ENCODE measurements at regions of chr2 and their contacts with region 1.

Region 1: GRCh38 chr2:55175254-55176025 is 56.7 kb downstream of the CLHC1 start:
- DNase-seq: no peak
- H3K4me3 Mint-ChIP-seq: no peak overlapping the region
- H3K27ac Mint-ChIP-seq: no peak overlapping the region
- H3K4me1 Mint-ChIP-seq: peaks cover 7% of the 10 kb centered on the region
- H3K27me3 Mint-ChIP-seq: no peaks in the 10 kb centered on the region

Region 2: GRCh38 chr2:54106631-54107454 is 1068.6 kb before region 1 on chr2:
- CTCF ChIA-PET with region 1: interaction called, 3 read pairs
- intact Hi-C with region 1: loop called (anchors 5 kb)
- DNase-seq: peak; percentile 71
- H3K4me3 Mint-ChIP-seq: no peak overlapping the region
- H3K27ac Mint-ChIP-seq: no peak overlapping the region
- H3K4me1 Mint-ChIP-seq: peaks cover 7% of the 10 kb centered on the region
- H3K27me3 Mint-ChIP-seq: no peaks in the 10 kb centered on the region

Region 3: GRCh38 chr2:54657664-54658083 is 517.8 kb before region 1 on chr2:
- CTCF ChIA-PET with region 1: no interaction called
- intact Hi-C with region 1: loop called (anchors 2 kb)
- DNase-seq: peak; percentile 58
- H3K4me3 Mint-ChIP-seq: no peak overlapping the region
- H3K27ac Mint-ChIP-seq: peak overlapping the region; percentile 60
- H3K4me1 Mint-ChIP-seq: peaks cover 18% of the 10 kb centered on the region
- H3K27me3 Mint-ChIP-seq: no peaks in the 10 kb centered on the region

Region 4: GRCh38 chr2:54763636-54764291 is 411.7 kb before region 1 on chr2:
- CTCF ChIA-PET with region 1: no interaction called
- intact Hi-C with region 1: loop called (anchors 2 kb)
- DNase-seq: peak; percentile 53
- H3K4me3 Mint-ChIP-seq: no peak overlapping the region
- H3K27ac Mint-ChIP-seq: no peak overlapping the region
- H3K4me1 Mint-ChIP-seq: peaks cover 12% of the 10 kb centered on the region
- H3K27me3 Mint-ChIP-seq: no peaks in the 10 kb centered on the region

Region 5: GRCh38 chr2:55014962-55015939 is 160.2 kb before region 1 on chr2:
- CTCF ChIA-PET with region 1: interaction called, 40 read pairs
- intact Hi-C with region 1: loop called (anchors 1 kb)
- DNase-seq: peak; percentile 60
- H3K4me3 Mint-ChIP-seq: no peak overlapping the region
- H3K27ac Mint-ChIP-seq: no peak overlapping the region
- H3K4me1 Mint-ChIP-seq: peaks cover 25% of the 10 kb centered on the region
- H3K27me3 Mint-ChIP-seq: no peaks in the 10 kb centered on the region

Region 6: DNA sequence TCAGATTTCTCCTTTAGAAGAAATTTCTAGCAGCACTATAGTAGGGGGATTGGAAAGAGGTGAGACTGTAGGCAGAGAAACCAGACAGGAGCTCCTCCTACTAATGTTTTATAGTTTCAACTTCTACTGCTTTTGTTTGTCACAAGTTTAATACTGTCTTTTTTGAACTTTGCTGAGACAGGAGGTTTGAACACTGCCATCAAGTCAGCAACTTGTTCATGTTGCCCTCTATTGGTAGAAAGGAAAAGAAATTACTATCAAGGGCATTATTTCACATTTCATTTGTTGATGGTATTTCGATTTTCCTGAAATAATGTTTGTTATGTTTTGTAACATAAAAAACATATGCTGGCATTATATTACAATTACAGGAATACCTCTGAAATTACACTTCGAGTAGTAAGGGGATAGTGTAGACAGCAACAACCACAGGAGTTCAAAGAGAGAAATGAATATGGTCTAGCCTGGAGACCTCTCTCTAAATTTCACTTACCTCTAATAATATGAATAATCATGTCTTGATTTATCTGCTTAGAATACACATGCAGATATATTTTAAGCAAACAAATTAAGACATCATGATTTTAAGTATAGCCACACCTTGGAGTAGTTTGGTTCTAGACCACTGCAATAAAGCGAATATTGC is 256.7 kb after region 1 on chr2:
- CTCF ChIA-PET with region 1: no interaction called
- intact Hi-C with region 1: loop called (anchors 1 kb)
- DNase-seq: no peak
- H3K4me3 Mint-ChIP-seq: no peak overlapping the region
- H3K27ac Mint-ChIP-seq: no peak overlapping the region
- H3K4me1 Mint-ChIP-seq: peaks cover 3% of the 10 kb centered on the region
- H3K27me3 Mint-ChIP-seq: no peaks in the 10 kb centered on the region